Dendritic cell treated with granulocyte-macrophage colony-stimulating factor and Interleukin-4, amounts not matched to agents 40 ng/mL and 50 ng/mL, for 4 days (primary cell): ENCODE measurements at regions of chr1 and their contacts with region 1.

Region 1: DNA sequence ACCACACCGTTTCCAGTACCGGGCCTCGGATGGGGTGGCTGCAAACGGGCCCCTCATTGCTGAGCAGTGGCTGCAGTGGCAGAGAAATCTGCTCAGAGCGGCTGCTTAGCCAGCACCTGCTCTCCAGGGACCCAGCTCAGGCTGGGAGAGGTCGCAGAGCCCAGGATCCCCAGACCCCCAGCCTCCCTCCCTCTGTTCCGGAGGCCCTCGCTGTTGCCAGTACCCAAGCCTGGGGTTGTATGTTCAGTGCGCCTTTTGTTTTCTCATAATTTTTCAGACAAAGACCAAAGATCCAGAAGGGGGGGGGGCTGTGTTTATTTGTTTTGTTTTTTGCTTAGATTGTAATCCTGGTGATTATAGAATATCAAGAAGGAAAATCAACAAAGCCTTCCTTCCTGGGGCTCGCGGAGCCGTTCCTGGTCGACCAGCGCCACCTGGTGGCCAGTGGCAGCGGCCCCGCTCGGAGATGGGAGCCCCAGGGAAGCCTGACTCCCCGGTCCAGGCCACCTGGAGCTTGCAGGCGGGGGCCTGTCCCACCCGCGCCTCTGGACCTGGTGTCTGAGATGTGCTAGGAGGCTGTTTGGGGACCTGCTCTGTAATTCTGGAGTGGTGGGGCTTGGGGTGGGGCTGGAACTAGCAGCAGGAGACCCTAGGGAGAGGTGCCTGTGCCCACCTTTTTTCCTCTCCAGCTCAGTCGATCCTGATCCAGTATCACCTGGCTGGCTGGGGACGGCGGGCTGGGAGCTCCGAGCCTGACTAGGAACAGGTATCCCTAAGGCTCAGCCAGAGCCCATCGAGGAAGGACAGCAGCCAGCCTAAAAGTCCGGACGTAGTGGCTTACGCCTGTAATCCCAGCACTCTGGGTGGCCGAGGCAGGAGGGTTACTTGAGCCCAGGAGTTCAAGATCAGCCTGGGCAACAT is 123.9 kb upstream of the VAMP3 start:
- H3K4me3 Mint-ChIP-seq: no peak overlapping the region
- H3K27ac Mint-ChIP-seq: no peak overlapping the region
- H3K4me1 Mint-ChIP-seq: peaks cover 8% of the 10 kb centered on the region
- H3K27me3 Mint-ChIP-seq: peaks cover 11% of the 10 kb centered on the region

Region 2: DNA sequence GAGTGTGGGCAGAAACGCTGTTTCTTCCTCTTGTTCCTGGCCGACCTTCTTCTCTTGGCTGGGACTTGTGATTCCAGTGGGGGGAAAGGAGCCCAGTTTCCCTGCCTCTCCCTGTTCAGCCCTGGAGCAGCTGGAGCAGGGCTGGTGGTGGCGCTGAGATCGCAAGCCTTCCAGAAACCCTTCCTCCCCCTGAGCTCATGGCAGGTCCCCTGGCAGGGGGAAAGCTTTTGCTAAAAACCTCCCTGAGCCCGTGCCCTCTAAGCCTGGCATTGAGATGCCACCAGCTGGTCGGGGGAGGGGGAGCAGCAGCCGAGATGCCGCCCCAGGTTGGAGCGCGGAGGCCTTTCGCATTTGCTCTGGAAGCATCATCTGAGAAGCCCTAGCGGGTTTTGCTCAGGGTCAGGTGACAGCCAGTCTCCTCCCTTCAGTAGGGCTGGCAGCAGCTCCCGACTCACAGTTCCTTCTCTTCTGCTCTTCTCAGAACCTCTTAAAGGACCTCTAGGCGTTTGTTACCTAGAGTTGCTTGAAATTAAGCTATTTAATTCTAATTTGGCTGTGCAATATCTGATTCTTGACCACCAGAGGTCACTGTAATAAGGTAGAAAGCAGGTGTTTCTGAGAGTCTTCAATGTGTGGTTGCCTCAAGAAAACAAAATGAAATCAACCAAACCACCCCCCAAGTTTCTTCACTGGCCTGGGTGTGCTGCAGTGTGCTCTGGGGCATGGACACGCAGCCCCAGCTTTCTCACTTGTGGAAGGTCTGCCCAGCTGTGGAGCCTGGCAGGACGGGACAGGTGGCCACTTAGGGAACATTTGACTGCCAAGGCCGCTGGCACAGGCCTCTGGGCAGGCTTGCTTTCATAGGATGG is 604.7 kb before region 1 on chr1:
- intact Hi-C with region 1: loop called (anchors 5 kb)
- H3K4me3 Mint-ChIP-seq: no peak overlapping the region
- H3K27ac Mint-ChIP-seq: no peak overlapping the region
- H3K4me1 Mint-ChIP-seq: no peaks in the 10 kb centered on the region
- H3K27me3 Mint-ChIP-seq: peaks cover 4% of the 10 kb centered on the region

Region 3: GRCh38 chr1:7454052-7454815 is 193.0 kb before region 1 on chr1:
- intact Hi-C with region 1: loop called (anchors 5 kb)
- H3K4me3 Mint-ChIP-seq: no peak overlapping the region
- H3K27ac Mint-ChIP-seq: no peak overlapping the region
- H3K4me1 Mint-ChIP-seq: peaks cover 6% of the 10 kb centered on the region
- H3K27me3 Mint-ChIP-seq: peaks cover 1% of the 10 kb centered on the region